H1 (cell line): ENCODE measurements at regions of chr1 and their contacts with region 1.

Region 1: DNA sequence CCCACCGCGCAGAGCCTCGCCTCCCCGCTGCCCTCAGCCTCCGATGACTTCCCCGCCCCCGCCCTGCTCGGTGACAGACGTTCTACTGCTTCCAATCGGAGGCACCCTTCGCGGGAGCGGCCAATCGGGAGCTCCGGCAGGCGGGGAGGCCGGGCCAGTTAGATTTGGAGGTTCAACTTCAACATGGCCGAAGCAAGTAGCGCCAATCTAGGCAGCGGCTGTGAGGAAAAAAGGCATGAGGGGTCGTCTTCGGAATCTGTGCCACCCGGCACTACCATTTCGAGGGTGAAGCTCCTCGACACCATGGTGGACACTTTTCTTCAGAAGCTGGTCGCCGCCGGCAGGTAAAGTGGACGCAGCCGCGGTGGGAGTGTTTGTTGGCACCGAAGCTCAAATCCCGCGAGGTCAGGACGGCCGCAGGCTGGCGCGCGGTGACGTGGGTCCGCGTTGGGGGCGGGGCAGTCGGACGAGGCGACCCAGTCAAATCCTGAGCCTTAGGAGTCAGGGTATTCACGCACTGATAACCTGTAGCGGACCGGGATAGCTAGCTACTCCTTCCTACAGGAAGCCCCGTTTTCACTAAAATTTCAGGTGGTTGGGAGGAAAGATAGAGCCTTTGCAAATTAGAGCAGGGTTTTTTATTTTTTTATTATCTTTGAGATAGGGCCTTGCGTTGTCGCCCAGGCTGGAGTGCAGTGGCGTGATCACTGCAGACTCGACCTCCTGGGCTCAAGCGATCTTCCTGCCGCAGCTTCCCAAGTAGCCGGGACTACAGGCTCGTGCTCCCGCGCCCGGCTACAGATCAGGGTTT is at the start of gene PMF1:
- DNase-seq: peak; percentile 87 to 97
- H3K4me3 ChIP-seq: peak within 1 kb of the TSS; percentile 53 to 97 (median 92)
- H3K27ac ChIP-seq: peak within 1 kb of the TSS; percentile 100
- H3K4me1 ChIP-seq: peaks cover 0 to 5% (median 3%) of the 10 kb centered on the region in 4 experiments; a peak in 5 of 7 replicates
- H3K27me3 ChIP-seq: no peaks in the 10 kb centered on the region
- CTCF ChIP-seq: no peak
- EP300 ChIP-seq: no peak
- POLR2A ChIP-seq: peak; percentile 97
- RAD21 ChIP-seq: peak in 1 of 2 experiments; percentile 6; a peak in 1 of 4 replicates
- total RNA-seq, gene PMF1: 113 and 116 TPM in 2 replicates

Region 2: GRCh38 chr1:156114101-156114916 is 98.7 kb before region 1 on chr1 and contains the start of gene LMNA:
- CTCF ChIA-PET with region 1: no interaction called
- POLR2A ChIA-PET with region 1: interaction called, 11 read pairs
- DNase-seq: peak in 1 of 2 experiments; percentile 86
- H3K4me3 ChIP-seq: peak within 1 kb of the TSS; percentile 69 to 83 (median 78)
- H3K27ac ChIP-seq: peak within 1 kb of the TSS; percentile 59; the same call in 1 of the 2 replicates
- H3K4me1 ChIP-seq: peaks cover 0 to 15% (median 14%) of the 10 kb centered on the region in 4 experiments; a peak in 6 of 7 replicates
- H3K27me3 ChIP-seq: peaks cover 0 to 2% (median 0%) of the 10 kb centered on the region in 4 experiments; a peak in 1 of 7 replicates
- CTCF ChIP-seq: no peak
- EP300 ChIP-seq: no peak
- POLR2A ChIP-seq: peak; percentile 70 to 78
- RAD21 ChIP-seq: no peak
- total RNA-seq, gene LMNA: 46.8 and 48.0 TPM in 2 replicates

Region 3: DNA sequence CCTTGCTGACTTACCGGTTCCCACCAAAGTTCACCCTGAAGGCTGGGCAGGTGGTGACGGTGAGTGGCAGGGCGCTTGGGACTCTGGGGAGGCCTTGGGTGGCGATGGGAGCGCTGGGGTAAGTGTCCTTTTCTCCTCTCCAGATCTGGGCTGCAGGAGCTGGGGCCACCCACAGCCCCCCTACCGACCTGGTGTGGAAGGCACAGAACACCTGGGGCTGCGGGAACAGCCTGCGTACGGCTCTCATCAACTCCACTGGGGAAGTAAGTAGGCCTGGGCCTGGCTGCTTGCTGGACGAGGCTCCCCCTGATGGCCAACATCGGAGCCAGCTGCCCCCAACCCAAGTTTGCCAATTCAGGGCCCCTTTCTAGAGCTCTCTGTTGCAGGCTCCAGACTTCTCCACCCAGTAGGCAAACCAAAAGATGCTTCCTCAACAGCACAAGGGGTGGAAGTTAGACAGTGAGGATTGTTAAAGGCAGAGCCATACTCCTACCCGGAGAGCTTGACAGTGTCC is 76.0 kb before region 1 on chr1:
- CTCF ChIA-PET with region 1: interaction called, 1,265 read pairs
- POLR2A ChIA-PET with region 1: interaction called, 6 read pairs
- DNase-seq: peak in 1 of 2 experiments; percentile 67
- H3K4me3 ChIP-seq: no peak overlapping the region
- H3K27ac ChIP-seq: no peak overlapping the region
- H3K4me1 ChIP-seq: peaks cover 0 to 6% (median 4%) of the 10 kb centered on the region in 4 experiments; a peak in 4 of 7 replicates
- H3K27me3 ChIP-seq: no peaks in the 10 kb centered on the region
- CTCF ChIP-seq: peak; percentile 59 to 71 (median 65)
- EP300 ChIP-seq: no peak
- POLR2A ChIP-seq: no peak
- RAD21 ChIP-seq: peak; percentile 32 to 51; a peak in 3 of 4 replicates

Region 4: DNA sequence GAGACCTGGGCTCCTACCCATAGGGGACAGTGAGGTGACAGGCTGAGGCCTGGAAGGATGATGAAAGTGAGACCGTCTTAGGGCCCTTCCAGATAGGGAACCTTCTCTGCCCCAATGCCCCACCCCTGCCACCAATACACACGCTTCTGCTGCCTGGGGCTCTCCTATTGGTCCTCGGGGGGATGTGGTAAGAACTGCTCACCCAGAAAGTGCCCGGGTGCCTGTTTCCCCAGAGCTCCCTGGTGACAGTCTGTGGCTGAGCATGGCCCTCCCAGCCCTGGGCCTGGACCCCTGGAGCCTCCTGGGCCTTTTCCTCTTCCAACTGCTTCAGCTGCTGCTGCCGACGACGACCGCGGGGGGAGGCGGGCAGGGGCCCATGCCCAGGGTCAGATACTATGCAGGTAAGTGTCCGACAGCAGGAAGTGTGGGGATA is 58.7 kb before region 1 on chr1:
- CTCF ChIA-PET with region 1: interaction called, 1,265 read pairs
- POLR2A ChIA-PET with region 1: interaction called, 64 read pairs
- DNase-seq: no peak
- H3K4me3 ChIP-seq: no peak overlapping the region
- H3K27ac ChIP-seq: no peak overlapping the region
- H3K4me1 ChIP-seq: peaks cover 16 to 28% (median 17%) of the 10 kb centered on the region in 4 experiments
- H3K27me3 ChIP-seq: no peaks in the 10 kb centered on the region
- CTCF ChIP-seq: no peak
- EP300 ChIP-seq: no peak
- POLR2A ChIP-seq: no peak
- RAD21 ChIP-seq: no peak

Region 5: DNA sequence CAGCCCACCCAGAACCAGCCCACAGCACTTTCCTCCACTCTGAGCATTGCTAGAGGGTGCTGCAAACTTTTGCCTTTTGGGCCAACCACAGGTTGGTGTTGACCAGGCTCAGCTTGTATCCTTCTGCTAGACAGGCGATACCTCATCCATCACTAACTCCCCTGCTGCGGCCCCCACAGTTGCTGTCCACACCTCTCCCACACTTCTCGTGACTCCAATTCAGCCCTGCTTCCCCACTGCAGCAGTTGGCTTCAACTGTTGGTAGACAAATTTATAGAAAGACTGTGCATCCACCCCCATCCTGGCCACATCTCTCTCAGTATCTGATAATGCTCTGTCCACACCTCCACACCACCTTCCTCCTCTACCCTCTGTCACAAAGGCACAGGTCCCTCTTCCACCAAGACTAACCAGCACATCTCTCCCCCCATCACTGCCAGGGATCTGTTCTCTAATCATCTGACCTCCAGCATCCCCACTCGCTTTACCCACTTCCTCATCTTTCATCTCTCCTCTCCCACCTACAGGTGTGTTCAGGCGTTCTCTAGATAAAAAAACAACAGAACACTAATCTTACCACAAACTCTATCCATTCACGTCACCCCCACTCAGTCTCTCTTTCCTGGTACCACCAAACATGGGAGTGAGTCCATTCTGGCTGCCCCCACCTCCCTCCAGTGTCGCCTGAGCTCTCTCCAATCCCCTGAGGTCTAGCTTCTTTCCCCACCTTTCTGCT is 35.0 kb before region 1 on chr1:
- CTCF ChIA-PET with region 1: interaction called, 6 read pairs
- POLR2A ChIA-PET with region 1: interaction called, 11 read pairs
- DNase-seq: no peak
- H3K4me3 ChIP-seq: no peak overlapping the region
- H3K27ac ChIP-seq: no peak overlapping the region; the same call in 1 of the 2 replicates
- H3K4me1 ChIP-seq: peaks cover 6 to 21% (median 14%) of the 10 kb centered on the region in 4 experiments
- H3K27me3 ChIP-seq: no peaks in the 10 kb centered on the region
- CTCF ChIP-seq: no peak
- EP300 ChIP-seq: no peak
- POLR2A ChIP-seq: no peak
- RAD21 ChIP-seq: no peak

Region 6: DNA sequence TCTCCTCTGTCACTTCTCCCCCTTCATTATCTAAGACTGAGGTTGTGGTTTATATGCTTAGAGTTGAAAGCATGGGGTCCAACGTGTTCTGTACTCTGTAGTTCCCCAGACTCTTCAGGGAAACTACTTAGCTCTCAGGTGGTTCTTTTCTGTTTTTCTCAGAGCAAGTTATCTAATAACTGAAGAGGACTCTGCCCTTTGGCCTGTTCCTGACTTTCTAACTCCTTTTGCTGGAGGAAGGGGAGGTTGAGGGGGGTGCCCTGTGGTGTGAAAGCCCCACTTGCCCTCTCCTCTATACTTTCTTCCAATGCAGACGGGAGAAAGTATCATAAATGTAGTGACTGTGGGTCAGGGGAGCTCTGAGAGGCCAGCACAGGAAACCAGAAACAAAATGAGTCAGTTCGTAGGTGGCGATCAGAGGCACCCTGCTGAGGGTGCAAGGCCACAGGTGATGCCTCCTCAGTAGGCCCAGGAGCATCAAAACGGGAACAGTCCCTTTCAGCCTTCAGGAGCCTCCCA is 14.1 kb before region 1 on chr1:
- CTCF ChIA-PET with region 1: interaction called, 12 read pairs
- POLR2A ChIA-PET with region 1: interaction called, 77 read pairs
- DNase-seq: no peak
- H3K4me3 ChIP-seq: no peak overlapping the region
- H3K27ac ChIP-seq: no peak overlapping the region
- H3K4me1 ChIP-seq: peaks cover 0 to 16% (median 3%) of the 10 kb centered on the region in 4 experiments; a peak in 4 of 7 replicates
- H3K27me3 ChIP-seq: no peaks in the 10 kb centered on the region
- CTCF ChIP-seq: no peak
- EP300 ChIP-seq: no peak
- POLR2A ChIP-seq: no peak
- RAD21 ChIP-seq: no peak

Region 7: DNA sequence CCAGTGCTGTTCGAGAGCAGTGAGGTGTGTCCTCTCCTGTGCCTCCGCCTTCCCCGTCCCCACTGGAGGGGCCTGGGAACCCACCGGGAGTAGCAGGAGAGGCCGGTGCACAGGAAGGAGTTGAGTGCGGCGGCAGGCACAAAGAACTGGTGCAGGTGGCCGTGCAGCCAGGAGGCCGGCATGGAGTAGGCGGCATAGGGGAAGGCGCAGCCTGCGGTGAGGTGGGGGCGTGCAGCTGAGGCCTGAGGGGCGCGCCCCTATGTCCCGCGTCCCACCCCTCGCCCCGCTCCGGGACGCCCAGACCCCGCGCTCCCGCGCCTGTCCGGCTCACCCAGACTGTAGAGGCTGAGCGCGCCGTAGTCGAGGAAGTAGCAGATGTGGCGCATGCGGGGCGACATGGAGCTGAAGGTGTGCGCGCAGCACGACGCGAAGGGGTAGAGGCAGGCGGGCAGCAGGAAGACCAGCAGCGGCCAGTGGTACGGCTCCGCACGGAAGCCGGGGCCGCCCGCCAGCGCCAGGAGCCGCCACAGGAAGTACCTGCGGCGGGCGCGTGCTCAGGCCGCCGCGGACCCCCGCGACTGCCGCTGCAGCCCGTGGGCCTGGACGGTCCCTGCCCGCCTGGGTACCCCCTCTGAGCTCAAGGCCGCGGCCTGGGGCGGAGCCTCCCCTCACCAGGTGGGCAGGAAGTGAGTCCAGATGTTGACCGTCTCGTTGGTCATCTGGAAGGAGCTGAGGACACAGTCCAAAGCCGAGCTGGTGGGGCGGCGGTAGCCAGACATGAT is 32.6 kb after region 1 on chr1:
- CTCF ChIA-PET with region 1: interaction called, 4 read pairs
- POLR2A ChIA-PET with region 1: interaction called, 11 read pairs
- DNase-seq: peak in 1 of 2 experiments; percentile 54
- H3K4me3 ChIP-seq: peak overlapping the region in 3 of 4 experiments; percentile 7 to 40 (median 10); a peak in 5 of 8 replicates
- H3K27ac ChIP-seq: no peak overlapping the region
- H3K4me1 ChIP-seq: peaks cover 0 to 16% (median 9%) of the 10 kb centered on the region in 4 experiments
- H3K27me3 ChIP-seq: no peaks in the 10 kb centered on the region
- CTCF ChIP-seq: no peak
- EP300 ChIP-seq: no peak
- POLR2A ChIP-seq: no peak
- RAD21 ChIP-seq: no peak